ENCODE measurements at regions of chr6 and their contacts with region 1.

Region 1: GRCh38 chr6:14721103-14721746 is 524.6 kb upstream of the JARID2 start:
- DNase-seq: peak in 1 of 2 experiments; percentile 35
- H3K4me3 ChIP-seq: no peak overlapping the region
- H3K4me3 Mint-ChIP-seq: no peak overlapping the region
- H3K27ac Mint-ChIP-seq: no peak overlapping the region
- H3K4me1 ChIP-seq: peaks cover 8% of the 10 kb centered on the region
- H3K4me1 Mint-ChIP-seq: peaks cover 11% of the 10 kb centered on the region
- H3K27me3 ChIP-seq: no peaks in the 10 kb centered on the region
- H3K27me3 Mint-ChIP-seq: no peaks in the 10 kb centered on the region
- CTCF ChIP-seq: no peak

Region 2: GRCh38 chr6:14638906-14639761 is 82.1 kb before region 1 on chr6:
- CTCF ChIA-PET with region 1: no interaction called
- POLR2A ChIA-PET with region 1: no interaction called
- intact Hi-C with region 1: no loop called
- DNase-seq: no peak
- H3K4me3 ChIP-seq: no peak overlapping the region
- H3K4me3 Mint-ChIP-seq: no peak overlapping the region
- H3K27ac Mint-ChIP-seq: no peak overlapping the region
- H3K4me1 ChIP-seq: no peaks in the 10 kb centered on the region
- H3K4me1 Mint-ChIP-seq: peaks cover 7% of the 10 kb centered on the region
- H3K27me3 ChIP-seq: no peaks in the 10 kb centered on the region
- H3K27me3 Mint-ChIP-seq: no peaks in the 10 kb centered on the region
- CTCF ChIP-seq: no peak

Region 3: DNA sequence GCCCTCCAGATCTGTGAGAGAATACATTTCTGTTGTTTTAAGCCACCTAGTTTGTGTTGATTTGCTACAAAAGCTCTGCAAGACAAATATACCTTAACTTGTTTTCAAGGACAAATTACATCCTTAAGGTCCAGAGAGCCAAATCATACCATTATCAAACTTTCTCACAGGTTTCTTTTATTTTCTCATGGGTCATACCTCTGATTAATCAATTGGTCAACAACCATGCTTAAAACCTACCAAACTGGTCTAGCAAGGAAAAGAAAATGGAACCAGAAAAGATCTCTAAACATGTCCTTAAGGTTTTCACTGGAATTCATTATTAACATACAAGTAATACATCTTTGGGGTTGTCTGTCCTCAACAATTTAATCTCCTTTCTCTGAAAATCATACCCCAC is 68.7 kb before region 1 on chr6:
- CTCF ChIA-PET with region 1: no interaction called
- POLR2A ChIA-PET with region 1: no interaction called
- intact Hi-C with region 1: no loop called
- DNase-seq: no peak
- H3K4me3 ChIP-seq: no peak overlapping the region
- H3K4me3 Mint-ChIP-seq: no peak overlapping the region
- H3K27ac Mint-ChIP-seq: no peak overlapping the region
- H3K4me1 ChIP-seq: peaks cover 7% of the 10 kb centered on the region; the same call in 1 of the 2 replicates
- H3K4me1 Mint-ChIP-seq: no peaks in the 10 kb centered on the region
- H3K27me3 ChIP-seq: no peaks in the 10 kb centered on the region
- H3K27me3 Mint-ChIP-seq: no peaks in the 10 kb centered on the region
- CTCF ChIP-seq: no peak

Region 4: DNA sequence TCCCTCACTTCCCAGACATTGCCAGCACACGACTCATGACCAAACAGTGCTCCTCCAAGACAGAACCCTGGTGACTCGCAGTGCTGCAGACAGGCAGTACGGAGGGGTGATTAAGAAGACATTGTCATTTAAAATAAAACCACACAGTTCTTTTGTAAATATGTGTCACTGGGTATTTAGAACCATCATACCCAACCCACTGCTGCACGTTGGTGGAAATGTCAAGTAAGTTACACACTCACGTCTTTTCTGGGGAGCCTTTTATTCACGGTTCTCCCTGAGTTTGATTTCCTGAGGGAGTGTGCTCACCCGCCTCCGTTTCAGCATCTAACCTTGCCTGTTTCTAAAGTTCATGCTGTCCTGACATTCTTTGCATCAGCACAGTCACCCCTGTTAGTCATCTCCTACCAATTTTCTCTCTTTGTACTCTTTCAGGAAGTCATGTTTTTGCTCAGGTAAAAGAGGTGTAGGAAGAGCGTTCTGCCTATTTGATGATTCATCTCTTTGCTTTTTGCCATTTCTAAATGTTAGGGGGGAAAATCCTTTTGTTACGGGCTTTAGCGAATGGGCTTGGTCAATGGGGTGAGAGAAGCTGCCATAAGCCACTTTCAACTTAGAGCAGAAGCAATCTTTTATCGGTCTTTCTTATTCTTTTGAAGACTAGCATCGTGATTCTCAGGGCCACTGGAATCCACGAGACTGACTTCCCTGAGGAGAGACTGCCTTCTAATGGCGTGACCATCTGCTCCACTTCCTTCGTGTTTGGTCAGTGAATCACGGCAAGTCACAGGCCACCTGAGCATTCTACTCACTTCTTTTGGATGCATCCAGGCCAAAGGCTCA is 11.8 kb after region 1 on chr6:
- CTCF ChIA-PET with region 1: no interaction called
- POLR2A ChIA-PET with region 1: interaction called, 9 read pairs
- intact Hi-C with region 1: loop called (anchors 1 kb)
- DNase-seq: no peak
- H3K4me3 ChIP-seq: no peak overlapping the region
- H3K4me3 Mint-ChIP-seq: peak overlapping the region; percentile 41
- H3K27ac Mint-ChIP-seq: peak overlapping the region; percentile 85
- H3K4me1 ChIP-seq: peaks cover 33% of the 10 kb centered on the region
- H3K4me1 Mint-ChIP-seq: peaks cover 19% of the 10 kb centered on the region
- H3K27me3 ChIP-seq: no peaks in the 10 kb centered on the region
- H3K27me3 Mint-ChIP-seq: no peaks in the 10 kb centered on the region
- CTCF ChIP-seq: no peak

Region 5: GRCh38 chr6:14784596-14785492 is 63.6 kb after region 1 on chr6:
- CTCF ChIA-PET with region 1: no interaction called
- POLR2A ChIA-PET with region 1: interaction called, 11 read pairs
- intact Hi-C with region 1: no loop called
- DNase-seq: no peak
- H3K4me3 ChIP-seq: no peak overlapping the region
- H3K4me3 Mint-ChIP-seq: no peak overlapping the region
- H3K27ac Mint-ChIP-seq: no peak overlapping the region
- H3K4me1 ChIP-seq: no peaks in the 10 kb centered on the region
- H3K4me1 Mint-ChIP-seq: no peaks in the 10 kb centered on the region
- H3K27me3 ChIP-seq: no peaks in the 10 kb centered on the region
- H3K27me3 Mint-ChIP-seq: no peaks in the 10 kb centered on the region
- CTCF ChIP-seq: no peak

Measured in Caco-2 (cell line).